SK-N-SH (cell line): ENCODE measurements at regions of chr13 and their contacts with region 1.

Region 1: GRCh38 chr13:30617315-30618185 is at the start of gene USPL1:
- DNase-seq: peak; percentile 95
- H3K4me3 ChIP-seq: peak within 1 kb of the TSS; percentile 96 to 98
- H3K27ac ChIP-seq: peak within 1 kb of the TSS; percentile 100
- H3K4me1 ChIP-seq: peaks cover 14% of the 10 kb centered on the region in 2 experiments; a peak in 3 of 4 replicates
- H3K27me3 ChIP-seq: no peaks in the 10 kb centered on the region
- CTCF ChIP-seq: no peak
- EP300 ChIP-seq: peak; percentile 68 to 97
- RAD21 ChIP-seq: peak; percentile 16; the same call in 1 of the 2 replicates
- polyA plus RNA-seq, gene USPL1: 6.4 and 9.2 TPM in 2 replicates

Region 2: GRCh38 chr13:30465585-30466357 is 151.8 kb before region 1 on chr13 and contains the start of gene HMGB1:
- CTCF ChIA-PET with region 1: no interaction called
- POLR2A ChIA-PET with region 1: interaction called, 25 read pairs
- DNase-seq: peak; percentile 88
- H3K4me3 ChIP-seq: peak within 1 kb of the TSS; percentile 68 to 92
- H3K27ac ChIP-seq: peak within 1 kb of the TSS; percentile 97 to 98
- H3K4me1 ChIP-seq: peaks cover 13 to 23% of the 10 kb centered on the region in 2 experiments; a peak in 3 of 4 replicates
- H3K27me3 ChIP-seq: no peaks in the 10 kb centered on the region
- CTCF ChIP-seq: no peak
- EP300 ChIP-seq: no peak
- RAD21 ChIP-seq: no peak
- polyA plus RNA-seq, gene HMGB1: 166 and 193 TPM in 2 replicates

Region 3: GRCh38 chr13:30792285-30793000 is 174.9 kb after region 1 on chr13:
- CTCF ChIA-PET with region 1: interaction called, 4 read pairs
- POLR2A ChIA-PET with region 1: interaction called, 11 read pairs
- DNase-seq: peak; percentile 75
- H3K4me3 ChIP-seq: 0 out of 4 replicates have a peak overlapping the region, but pooled peaks of 1 of the 2 experiments have one; percentile 1
- H3K27ac ChIP-seq: peak overlapping the region; percentile 70 to 93
- H3K4me1 ChIP-seq: peaks cover 32 to 42% of the 10 kb centered on the region in 2 experiments
- H3K27me3 ChIP-seq: no peaks in the 10 kb centered on the region
- CTCF ChIP-seq: peak; percentile 53
- EP300 ChIP-seq: peak; percentile 86 to 91; a peak in 3 of 4 replicates
- RAD21 ChIP-seq: peak; percentile 44

Region 4: GRCh38 chr13:30802953-30803478 is 185.5 kb after region 1 on chr13:
- CTCF ChIA-PET with region 1: interaction called, 10 read pairs
- POLR2A ChIA-PET with region 1: interaction called, 9 read pairs
- DNase-seq: peak; percentile 82
- H3K4me3 ChIP-seq: peak overlapping the region in 1 of 2 experiments; percentile 17; a peak in 1 of 4 replicates
- H3K27ac ChIP-seq: no peak overlapping the region
- H3K4me1 ChIP-seq: peaks cover 19 to 24% of the 10 kb centered on the region in 2 experiments
- H3K27me3 ChIP-seq: no peaks in the 10 kb centered on the region
- CTCF ChIP-seq: peak; percentile 89
- EP300 ChIP-seq: no peak
- RAD21 ChIP-seq: peak; percentile 95